ENCODE measurements at regions of chr19 and their contacts with region 1.

Region 1: GRCh38 chr19:11203194-11204075 is 6.1 kb upstream of the KANK2 start:
- DNase-seq: peak; percentile 57
- ATAC-seq: peak; percentile 44
- H3K4me3 Mint-ChIP-seq: no peak overlapping the region
- H3K27ac Mint-ChIP-seq: no peak overlapping the region
- H3K4me1 Mint-ChIP-seq: no peaks in the 10 kb centered on the region
- H3K27me3 Mint-ChIP-seq: peaks cover 3% of the 10 kb centered on the region

Region 2: DNA sequence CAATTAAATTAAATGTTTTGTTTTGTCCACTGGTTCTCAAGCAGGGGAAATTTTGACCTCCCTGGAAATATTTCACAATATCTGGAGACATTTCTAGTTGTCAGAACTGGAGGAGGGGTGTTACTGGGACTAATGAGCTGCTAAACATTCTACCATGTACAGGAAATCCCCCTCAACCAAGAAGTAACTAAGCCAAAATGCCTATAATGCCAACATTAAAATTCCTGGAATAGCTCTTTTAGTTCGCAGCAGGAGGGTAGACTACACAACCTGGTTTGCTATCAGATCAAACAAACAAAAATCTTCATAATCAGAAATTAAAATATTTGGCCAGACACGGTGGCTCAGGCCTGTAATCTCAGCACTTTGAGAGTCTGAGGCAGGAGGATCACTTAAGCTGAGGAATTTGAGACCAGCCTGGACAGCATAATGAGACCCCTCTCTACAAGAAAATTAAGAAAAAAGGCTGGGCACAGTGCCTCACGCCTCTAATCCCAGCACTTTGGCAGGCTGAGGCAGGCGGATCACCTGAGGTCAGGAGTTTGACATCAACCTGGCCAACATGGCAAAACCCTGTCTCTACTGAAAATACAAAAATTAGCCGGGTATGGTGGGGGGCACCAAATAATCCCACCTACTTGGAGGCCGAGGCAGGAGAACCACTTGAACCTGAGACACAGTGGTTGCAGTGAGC is 256.3 kb before region 1 on chr19:
- CTCF ChIA-PET with region 1: no interaction called
- POLR2A ChIA-PET with region 1: no interaction called
- intact Hi-C with region 1: loop called in 1 of 2 experiments (anchors 1 kb)
- DNase-seq: no peak
- ATAC-seq: no peak
- H3K4me3 Mint-ChIP-seq: no peak overlapping the region
- H3K27ac Mint-ChIP-seq: no peak overlapping the region
- H3K4me1 Mint-ChIP-seq: peaks cover 6% of the 10 kb centered on the region
- H3K27me3 Mint-ChIP-seq: no peaks in the 10 kb centered on the region

Region 3: DNA sequence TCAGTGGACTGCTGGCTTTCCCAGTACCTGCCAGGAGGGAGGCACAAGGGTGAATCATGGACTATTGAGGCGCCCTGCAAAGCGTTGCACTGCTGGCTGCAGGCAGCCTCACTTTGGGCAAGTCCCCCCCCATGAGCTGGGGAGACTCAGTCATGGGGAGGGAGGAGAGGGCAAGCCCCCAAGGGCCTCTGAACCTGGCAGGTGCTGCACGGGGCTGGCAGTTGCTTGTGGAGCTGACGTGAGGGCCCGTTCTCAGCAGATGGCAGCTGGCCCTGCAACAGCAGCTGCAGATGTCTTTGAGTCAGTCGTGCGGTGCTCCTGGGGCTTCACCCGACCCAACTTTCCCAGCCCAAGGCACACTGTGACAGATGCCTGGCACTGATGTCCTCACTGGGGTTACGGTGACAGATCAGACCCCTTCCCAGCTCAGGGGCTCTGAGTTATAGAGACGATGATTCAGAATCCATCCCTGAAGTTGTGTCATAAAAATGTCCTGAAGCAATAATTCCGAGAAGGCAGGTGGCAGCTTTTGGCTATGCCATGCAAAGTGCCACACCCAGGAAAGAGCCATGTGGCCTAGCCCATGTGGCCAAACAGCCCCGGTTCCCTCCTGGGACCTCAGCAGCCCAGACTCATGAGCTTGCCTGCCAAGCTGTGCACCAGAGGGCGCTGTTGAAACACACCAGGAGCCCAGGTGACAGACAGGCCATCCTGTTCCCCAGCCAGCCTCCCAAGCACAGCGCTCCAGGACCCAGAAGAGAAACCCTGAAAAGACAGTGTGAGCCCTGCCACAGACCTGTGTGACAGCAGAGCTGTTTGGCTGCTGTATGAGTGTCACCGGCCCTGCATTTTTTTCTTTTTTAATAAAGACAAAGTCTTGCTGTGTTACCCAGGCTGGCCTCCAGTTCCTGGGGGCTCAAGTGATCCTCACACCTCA is 167.7 kb before region 1 on chr19:
- CTCF ChIA-PET with region 1: interaction called, 3 read pairs
- POLR2A ChIA-PET with region 1: no interaction called
- intact Hi-C with region 1: loop called (anchors 1 to 5 kb)
- DNase-seq: peak; percentile 94
- ATAC-seq: peak; percentile 99
- H3K4me3 Mint-ChIP-seq: no peak overlapping the region
- H3K27ac Mint-ChIP-seq: peak overlapping the region; percentile 9
- H3K4me1 Mint-ChIP-seq: peaks cover 6% of the 10 kb centered on the region
- H3K27me3 Mint-ChIP-seq: no peaks in the 10 kb centered on the region

Region 4: GRCh38 chr19:11137542-11138384 is 65.7 kb before region 1 on chr19:
- CTCF ChIA-PET with region 1: no interaction called
- POLR2A ChIA-PET with region 1: interaction called, 4 read pairs
- intact Hi-C with region 1: loop called (anchors 1 kb)
- DNase-seq: peak; percentile 72
- ATAC-seq: peak; percentile 80
- H3K4me3 Mint-ChIP-seq: peak overlapping the region; percentile 52
- H3K27ac Mint-ChIP-seq: no peak overlapping the region
- H3K4me1 Mint-ChIP-seq: peaks cover 11% of the 10 kb centered on the region
- H3K27me3 Mint-ChIP-seq: no peaks in the 10 kb centered on the region

Region 5: GRCh38 chr19:11164879-11165406 is 38.5 kb before region 1 on chr19:
- CTCF ChIA-PET with region 1: no interaction called
- POLR2A ChIA-PET with region 1: no interaction called
- intact Hi-C with region 1: loop called in 1 of 2 experiments (anchors 5 kb)
- DNase-seq: no peak
- ATAC-seq: no peak
- H3K4me3 Mint-ChIP-seq: no peak overlapping the region
- H3K27ac Mint-ChIP-seq: no peak overlapping the region
- H3K4me1 Mint-ChIP-seq: no peaks in the 10 kb centered on the region
- H3K27me3 Mint-ChIP-seq: no peaks in the 10 kb centered on the region

Region 6: GRCh38 chr19:11437955-11438354 is 234.5 kb after region 1 on chr19:
- CTCF ChIA-PET with region 1: no interaction called
- POLR2A ChIA-PET with region 1: no interaction called
- intact Hi-C with region 1: no loop called
- DNase-seq: no peak
- ATAC-seq: no peak
- H3K4me3 Mint-ChIP-seq: peak overlapping the region; percentile 43
- H3K27ac Mint-ChIP-seq: peak overlapping the region; percentile 5
- H3K4me1 Mint-ChIP-seq: peaks cover 16% of the 10 kb centered on the region
- H3K27me3 Mint-ChIP-seq: no peaks in the 10 kb centered on the region

Measured in activated CD4-positive, alpha-beta T cell treated with anti-CD3 and anti-CD28 coated beads for 36 hours (primary cell).